ENCODE measurements at regions of chr2 and their contacts with region 1.

Region 1: GRCh38 chr2:224927646-224928173 is 114.6 kb downstream of the DOCK10 start:
- DNase-seq: peak; percentile 24 to 81
- H3K4me3 ChIP-seq: no peak overlapping the region
- H3K27ac ChIP-seq: peak overlapping the region; percentile 90 to 97
- H3K4me1 ChIP-seq: peaks cover 29 to 67% of the 10 kb centered on the region in 2 donors
- H3K27me3 ChIP-seq: no peaks in the 10 kb centered on the region
- CTCF ChIP-seq: no peak

Region 2: DNA sequence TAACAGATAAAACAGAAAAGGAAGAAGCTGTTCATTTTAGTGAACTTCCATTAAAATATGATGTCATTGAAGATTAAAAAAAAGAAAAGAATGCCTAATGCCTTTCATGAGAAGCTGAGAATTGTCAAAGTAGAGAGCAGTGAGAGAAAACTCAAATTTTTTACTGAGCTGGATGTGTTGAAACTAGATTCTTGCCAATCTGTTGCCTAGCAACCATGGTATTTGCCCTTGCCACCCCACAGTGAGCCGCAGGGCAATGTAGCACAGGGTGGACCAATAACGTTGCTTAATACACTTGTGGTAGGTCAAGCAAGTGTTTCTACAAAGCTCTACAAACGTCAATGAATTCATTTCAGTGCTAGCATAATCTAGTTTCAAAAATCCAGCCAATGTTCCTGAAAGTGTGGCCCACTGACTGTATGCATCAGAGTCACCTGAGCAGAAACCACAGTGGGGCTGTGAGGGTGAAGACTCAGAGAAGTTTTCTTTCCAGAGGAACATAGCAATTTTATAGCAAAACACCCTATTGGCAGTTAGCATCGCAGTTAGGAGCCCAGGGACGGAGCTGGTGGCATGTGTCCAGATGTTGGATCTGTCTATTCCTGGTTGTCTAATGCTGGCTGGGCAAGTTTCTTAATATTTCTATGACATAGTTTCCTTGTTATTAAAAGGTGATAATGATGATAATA is 17.7 kb before region 1 on chr2:
- intact Hi-C with region 1: loop called (anchors 1 kb)
- DNase-seq: peak; percentile 56 to 90
- H3K4me3 ChIP-seq: peak overlapping the region; percentile 3 to 12
- H3K27ac ChIP-seq: peak overlapping the region; percentile 81 to 85
- H3K4me1 ChIP-seq: peaks cover 13 to 36% of the 10 kb centered on the region in 2 donors
- H3K27me3 ChIP-seq: no peaks in the 10 kb centered on the region
- CTCF ChIP-seq: no peak

Region 3: DNA sequence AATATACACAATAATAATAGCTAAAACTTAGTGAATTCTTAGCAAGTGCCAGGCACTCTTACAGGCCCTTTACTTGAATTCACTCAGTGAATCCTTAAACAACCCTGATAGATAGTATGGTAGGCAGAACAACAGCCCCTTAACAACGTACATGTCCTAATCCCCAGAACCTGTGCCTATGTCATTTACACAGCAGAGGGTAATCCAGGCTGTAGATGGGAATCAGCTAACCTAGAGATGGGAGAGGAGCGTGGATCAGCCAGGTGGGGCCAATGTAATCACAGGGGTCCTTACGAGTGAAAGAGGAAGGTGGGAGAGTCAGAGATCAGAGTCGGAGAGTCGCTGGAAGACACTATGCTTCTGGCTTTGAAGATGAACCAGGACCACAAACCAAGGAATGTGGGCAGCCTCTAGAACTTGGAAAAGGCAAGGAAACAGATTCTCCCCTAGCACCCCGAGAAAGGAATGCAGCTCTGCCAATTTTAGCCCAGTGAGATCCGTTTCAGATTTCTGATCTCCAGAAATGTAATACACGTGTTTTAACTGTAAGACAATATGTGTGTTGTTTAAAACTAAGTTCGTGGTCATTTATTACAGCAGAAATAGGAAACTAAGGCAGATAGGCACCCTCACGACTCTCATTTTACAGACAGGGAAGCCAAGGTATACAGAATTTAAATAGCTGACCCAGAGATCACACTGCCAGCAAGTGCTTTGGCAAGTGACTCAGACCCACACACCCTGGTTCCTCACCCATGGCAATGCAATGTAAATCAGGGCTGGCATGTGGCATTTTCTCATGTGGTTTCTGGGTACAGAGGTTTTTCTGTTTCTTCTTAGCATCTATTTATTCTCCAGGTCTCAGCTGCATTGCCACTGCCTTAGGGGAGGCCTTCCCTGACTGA is 45.7 kb after region 1 on chr2:
- intact Hi-C with region 1: loop called (anchors 5 kb)
- DNase-seq: peak; percentile 15 to 71
- H3K4me3 ChIP-seq: peak overlapping the region; percentile 28 to 48
- H3K27ac ChIP-seq: peak overlapping the region; percentile 79 to 87
- H3K4me1 ChIP-seq: peaks cover 5 to 16% of the 10 kb centered on the region in 2 donors
- H3K27me3 ChIP-seq: no peaks in the 10 kb centered on the region
- CTCF ChIP-seq: no peak

Region 4: DNA sequence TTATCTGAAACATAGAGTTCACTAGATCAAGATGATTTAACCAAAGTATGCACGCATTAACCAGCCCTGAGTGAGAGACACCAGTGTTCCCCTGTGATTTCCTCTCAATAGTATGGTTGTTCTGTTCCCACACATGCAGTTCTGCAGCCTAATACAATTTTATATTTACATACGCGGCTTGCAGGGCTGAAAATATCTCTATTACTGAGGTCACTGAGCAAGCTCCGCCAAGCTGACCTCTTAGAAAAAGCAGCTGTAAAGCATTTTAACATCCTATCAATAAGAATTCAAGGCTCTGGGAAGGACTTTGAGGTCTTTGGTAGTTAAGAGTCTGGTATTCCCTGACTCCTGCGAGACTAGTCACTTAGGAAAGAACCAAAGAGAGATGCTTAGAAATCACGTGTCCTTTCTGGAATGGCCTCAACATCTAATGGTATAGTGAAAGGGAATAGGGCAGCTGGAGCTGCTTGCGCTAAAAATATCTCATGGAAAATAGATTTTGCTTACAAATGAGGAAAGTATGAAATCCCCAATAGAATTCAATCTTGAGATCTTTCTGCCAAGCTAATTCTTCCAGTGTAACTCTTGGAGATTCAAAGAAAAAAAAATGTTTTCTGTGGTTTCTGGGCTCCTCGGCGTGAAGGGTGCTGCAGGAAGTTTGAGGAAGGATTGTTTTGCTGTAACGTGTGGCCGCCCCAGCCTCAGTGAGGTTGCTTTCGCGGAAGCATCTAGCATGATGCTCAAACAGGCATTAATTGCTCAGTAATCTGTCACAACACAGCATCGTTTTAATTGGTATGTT is 55.4 kb after region 1 on chr2:
- intact Hi-C with region 1: loop called (anchors 5 kb)
- DNase-seq: peak in 1 of 2 donors; percentile 71
- H3K4me3 ChIP-seq: peak overlapping the region; percentile 43 to 56
- H3K27ac ChIP-seq: peak overlapping the region; percentile 84 to 87
- H3K4me1 ChIP-seq: peaks cover 0 to 5% of the 10 kb centered on the region in 2 donors
- H3K27me3 ChIP-seq: no peaks in the 10 kb centered on the region
- CTCF ChIP-seq: no peak

Region 5: DNA sequence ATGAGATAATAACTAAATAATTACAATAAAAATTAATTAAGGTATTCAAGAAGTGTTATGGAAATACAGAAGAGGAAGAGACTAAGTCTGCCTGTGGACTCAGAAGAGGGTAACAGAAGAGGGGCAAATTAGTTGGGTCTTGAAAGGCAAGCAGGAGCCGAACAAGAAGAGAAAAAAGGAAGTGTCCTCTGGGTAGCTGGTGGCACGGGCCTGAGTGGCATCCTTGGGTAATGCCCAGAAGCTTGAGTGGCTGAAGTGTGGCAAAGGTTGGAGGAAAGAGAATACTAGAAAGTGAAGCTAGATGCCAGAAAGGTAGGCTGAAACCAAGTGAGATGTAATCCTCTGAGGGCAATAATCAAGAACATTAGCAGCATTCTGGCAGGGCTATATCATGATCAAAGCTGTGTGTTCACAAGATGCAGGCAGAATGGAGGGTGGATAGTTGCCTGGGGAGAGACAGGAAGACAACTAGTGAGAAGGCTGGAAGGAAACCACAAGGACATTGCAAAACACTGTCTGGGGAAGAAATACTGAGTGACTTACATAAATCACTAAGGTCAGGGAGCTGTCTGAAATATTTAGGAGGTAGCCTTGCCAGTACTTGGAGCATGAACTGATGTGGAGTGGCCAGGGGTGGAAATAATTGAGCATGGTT is 98.3 kb after region 1 on chr2:
- intact Hi-C with region 1: no loop called
- DNase-seq: no peak
- H3K4me3 ChIP-seq: no peak overlapping the region
- H3K27ac ChIP-seq: no peak overlapping the region
- H3K4me1 ChIP-seq: no peaks in the 10 kb centered on the region
- H3K27me3 ChIP-seq: no peaks in the 10 kb centered on the region
- CTCF ChIP-seq: no peak

Measured in ascending aorta (tissue), 2 donors.